Activated B cell treated with CpG ODN at 0.5 μM for 24 hours (primary cell): ENCODE measurements at regions of chrX and their contacts with region 1.

Region 1: GRCh38 chrX:24395775-24396174 is 35.3 kb downstream of the SUPT20HL1 start:
- DNase-seq: no peak
- ATAC-seq: peak; percentile 70
- H3K4me3 Mint-ChIP-seq: no peak overlapping the region
- H3K27ac Mint-ChIP-seq: no peak overlapping the region
- H3K4me1 Mint-ChIP-seq: no peaks in the 10 kb centered on the region
- H3K27me3 Mint-ChIP-seq: peaks cover 5% of the 10 kb centered on the region
- CTCF ChIP-seq: peak; percentile 49

Region 2: DNA sequence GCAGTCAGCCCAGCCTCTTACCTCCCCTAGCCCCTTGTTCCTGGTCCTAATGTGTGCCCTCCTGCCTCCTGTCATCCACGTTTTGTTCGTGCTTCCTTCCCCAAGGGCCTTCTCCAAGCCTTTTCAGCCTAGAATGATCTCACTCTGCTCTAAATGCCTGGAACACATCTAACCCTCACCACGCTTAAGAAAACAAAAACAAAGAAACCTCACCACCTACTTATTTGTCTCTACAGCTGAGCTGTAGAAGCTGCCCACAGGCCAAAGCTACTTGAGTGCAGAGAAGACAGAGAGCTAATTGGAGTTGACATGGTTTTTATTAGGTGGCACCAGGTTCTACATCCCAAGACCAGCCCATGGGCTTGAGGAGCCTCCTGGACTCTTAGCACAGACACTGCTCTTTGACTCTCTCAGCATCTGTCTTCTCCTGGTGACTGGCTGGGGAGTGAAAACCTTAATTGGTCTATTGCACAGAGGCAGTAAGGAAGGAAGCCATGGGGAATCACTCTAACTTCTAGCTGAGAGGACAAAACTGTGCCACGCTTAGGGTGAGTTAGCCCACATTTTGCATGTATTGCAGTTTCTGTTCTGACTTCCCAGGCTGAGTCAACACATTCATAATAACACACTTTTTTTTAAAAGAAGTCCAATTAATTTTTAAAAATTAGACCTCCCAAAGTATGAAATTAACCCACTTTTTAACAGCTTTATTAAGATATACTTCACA is 17.0 kb after region 1 on chrX:
- CTCF ChIA-PET with region 1: no interaction called
- POLR2A ChIA-PET with region 1: interaction called, 10 read pairs
- intact Hi-C with region 1: no loop called
- DNase-seq: no peak
- ATAC-seq: no peak
- H3K4me3 Mint-ChIP-seq: no peak overlapping the region
- H3K27ac Mint-ChIP-seq: no peak overlapping the region
- H3K4me1 Mint-ChIP-seq: no peaks in the 10 kb centered on the region
- H3K27me3 Mint-ChIP-seq: no peaks in the 10 kb centered on the region
- CTCF ChIP-seq: no peak

Region 3: DNA sequence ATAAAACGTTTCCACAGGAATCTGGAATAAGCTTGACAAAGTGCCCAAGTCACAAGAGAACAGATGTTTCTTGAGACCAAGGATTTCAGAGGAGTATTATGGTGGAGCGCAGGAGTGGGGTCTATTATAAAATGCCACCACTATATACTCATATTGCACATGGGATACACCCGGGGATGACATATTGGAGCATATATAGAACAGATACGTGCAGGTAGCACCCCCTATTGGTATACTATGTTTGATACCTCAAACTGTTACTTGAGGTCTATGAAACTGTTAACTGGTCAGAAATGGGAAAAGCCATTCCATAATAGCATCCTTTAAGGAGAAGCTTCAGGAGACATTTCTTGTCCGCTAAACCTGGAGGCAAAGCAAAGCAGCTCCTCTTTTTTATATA is 165.3 kb after region 1 on chrX:
- CTCF ChIA-PET with region 1: no interaction called
- POLR2A ChIA-PET with region 1: no interaction called
- intact Hi-C with region 1: loop called (anchors 2 kb)
- DNase-seq: no peak
- ATAC-seq: no peak
- H3K4me3 Mint-ChIP-seq: no peak overlapping the region
- H3K27ac Mint-ChIP-seq: no peak overlapping the region
- H3K4me1 Mint-ChIP-seq: no peaks in the 10 kb centered on the region
- H3K27me3 Mint-ChIP-seq: no peaks in the 10 kb centered on the region
- CTCF ChIP-seq: no peak